Colonic mucosa (tissue), 4 donors: ENCODE measurements at regions of chr6 and their contacts with region 1.

Region 1: GRCh38 chr6:138428944-138429598 is 25.0 kb downstream of the HEBP2 start:
- DNase-seq: no peak
- H3K4me3 ChIP-seq: no peak overlapping the region
- H3K27ac ChIP-seq: no peak overlapping the region
- H3K4me1 ChIP-seq: no peaks in the 10 kb centered on the region
- H3K27me3 ChIP-seq: no peaks in the 10 kb centered on the region
- CTCF ChIP-seq: peak; percentile 49

Region 2: GRCh38 chr6:138509371-138509770 is 80.3 kb after region 1 on chr6:
- intact Hi-C with region 1: loop called (anchors 2 kb)
- DNase-seq: peak; percentile 80
- H3K4me3 ChIP-seq: no peak overlapping the region
- H3K27ac ChIP-seq: no peak overlapping the region
- H3K4me1 ChIP-seq: peaks cover 16% of the 10 kb centered on the region
- H3K27me3 ChIP-seq: no peaks in the 10 kb centered on the region
- CTCF ChIP-seq: peak; percentile 67

Region 3: GRCh38 chr6:138588805-138589434 is 159.8 kb after region 1 on chr6:
- intact Hi-C with region 1: loop called (anchors 5 kb)
- DNase-seq: peak; percentile 70
- H3K4me3 ChIP-seq: no peak overlapping the region
- H3K27ac ChIP-seq: no peak overlapping the region
- H3K4me1 ChIP-seq: peaks cover 5% of the 10 kb centered on the region
- H3K27me3 ChIP-seq: no peaks in the 10 kb centered on the region
- CTCF ChIP-seq: peak; percentile 93

Region 4: GRCh38 chr6:138773177-138774091 is 344.4 kb after region 1 on chr6 and contains the start of gene CCDC28A:
- intact Hi-C with region 1: loop called (anchors 10 kb)
- DNase-seq: peak; percentile 97
- H3K4me3 ChIP-seq: peak within 1 kb of the TSS; percentile 69
- H3K27ac ChIP-seq: peak within 1 kb of the TSS; percentile 93
- H3K4me1 ChIP-seq: peaks cover 5% of the 10 kb centered on the region
- H3K27me3 ChIP-seq: no peaks in the 10 kb centered on the region
- CTCF ChIP-seq: no peak
- total RNA-seq, gene CCDC28A: 13.3 to 30.7 TPM

Region 5: GRCh38 chr6:139068846-139069245 is 639.8 kb after region 1 on chr6:
- intact Hi-C with region 1: no loop called
- DNase-seq: no peak
- H3K4me3 ChIP-seq: no peak overlapping the region
- H3K27ac ChIP-seq: no peak overlapping the region
- H3K4me1 ChIP-seq: no peaks in the 10 kb centered on the region
- H3K27me3 ChIP-seq: no peaks in the 10 kb centered on the region
- CTCF ChIP-seq: no peak